ENCODE measurements at regions of chr14 and their contacts with region 1.

Region 1: GRCh38 chr14:23555882-23556699 is at the start of gene THTPA:
- DNase-seq: peak; percentile 90 to 97 (median 92)
- H3K4me3 ChIP-seq: peak within 1 kb of the TSS; percentile 84 to 97
- H3K4me3 Mint-ChIP-seq: peak within 1 kb of the TSS; percentile 95 to 99 (median 96)
- H3K27ac ChIP-seq: peak within 1 kb of the TSS; percentile 86
- H3K27ac Mint-ChIP-seq: peak within 1 kb of the TSS; percentile 82 to 98 (median 97)
- H3K4me1 ChIP-seq: peaks cover 33% of the 10 kb centered on the region
- H3K4me1 Mint-ChIP-seq: peaks cover 15 to 44% (median 28%) of the 10 kb centered on the region in 4 donors
- H3K27me3 ChIP-seq: no peaks in the 10 kb centered on the region
- H3K27me3 Mint-ChIP-seq: peaks cover 0 to 2% of the 10 kb centered on the region in 2 donors
- total RNA-seq, gene THTPA: 25.6 to 26.2 TPM

Region 2: GRCh38 chr14:23301288-23301968 is 254.7 kb before region 1 on chr14:
- CTCF ChIA-PET with region 1: interaction called, 4 read pairs
- POLR2A ChIA-PET with region 1: interaction called, 4 read pairs
- intact Hi-C with region 1: loop called (anchors 1 kb)
- DNase-seq: peak; percentile 95 to 99 (median 98)
- H3K4me3 ChIP-seq: peak overlapping the region; percentile 86 to 90
- H3K4me3 Mint-ChIP-seq: peak overlapping the region; percentile 89 to 100 (median 90)
- H3K27ac ChIP-seq: peak overlapping the region; percentile 87
- H3K27ac Mint-ChIP-seq: peak overlapping the region; percentile 92 to 99 (median 96)
- H3K4me1 ChIP-seq: peaks cover 14% of the 10 kb centered on the region
- H3K4me1 Mint-ChIP-seq: peaks cover 14 to 29% (median 23%) of the 10 kb centered on the region in 4 donors
- H3K27me3 ChIP-seq: no peaks in the 10 kb centered on the region
- H3K27me3 Mint-ChIP-seq: peaks cover 8 to 9% of the 10 kb centered on the region in 2 donors

Region 3: DNA sequence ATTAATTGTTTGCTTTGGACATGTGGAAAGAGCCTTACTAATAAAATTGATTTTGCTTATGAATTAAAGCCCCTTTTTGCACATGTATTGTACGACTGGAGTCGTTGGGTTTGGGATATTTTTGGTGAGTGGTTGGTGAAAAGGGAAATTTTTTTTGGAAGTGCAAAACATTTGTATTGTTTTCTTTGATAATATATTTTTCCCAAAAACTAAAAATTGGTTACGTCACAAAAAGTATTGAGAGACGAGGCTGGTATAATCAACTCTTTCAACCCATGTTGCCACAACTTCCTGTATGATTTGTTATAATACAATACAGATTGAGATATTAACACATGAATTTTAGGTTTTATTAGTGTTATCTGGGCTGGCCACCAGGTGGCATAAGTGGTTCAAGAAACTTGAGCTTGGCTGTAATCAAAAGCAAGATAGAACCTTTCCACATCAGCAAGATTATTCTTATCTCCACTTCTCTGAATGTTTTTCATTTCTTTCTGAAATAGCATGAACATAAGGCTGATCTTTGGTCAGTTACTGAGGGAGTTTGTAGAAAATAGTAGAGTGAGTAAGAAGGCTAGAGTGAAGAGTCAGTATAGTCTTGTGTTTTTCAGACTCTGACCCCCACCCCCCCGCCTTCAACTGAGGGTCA is 77.9 kb before region 1 on chr14:
- CTCF ChIA-PET with region 1: interaction called, 174 read pairs
- POLR2A ChIA-PET with region 1: interaction called, 6 read pairs
- intact Hi-C with region 1: no loop called
- DNase-seq: peak; percentile 67 to 73 (median 71)
- H3K4me3 ChIP-seq: no peak overlapping the region
- H3K4me3 Mint-ChIP-seq: no peak overlapping the region
- H3K27ac ChIP-seq: no peak overlapping the region
- H3K27ac Mint-ChIP-seq: peak overlapping the region in 4 of 7 donors; percentile 0 to 83 (median 28)
- H3K4me1 ChIP-seq: peaks cover 8% of the 10 kb centered on the region
- H3K4me1 Mint-ChIP-seq: peaks cover 4 to 12% (median 5%) of the 10 kb centered on the region in 4 donors
- H3K27me3 ChIP-seq: no peaks in the 10 kb centered on the region
- H3K27me3 Mint-ChIP-seq: no peaks in the 10 kb centered on the region

Region 4: GRCh38 chr14:23539248-23540140 is 16.6 kb before region 1 on chr14:
- CTCF ChIA-PET with region 1: interaction called, 83 read pairs
- POLR2A ChIA-PET with region 1: no interaction called
- intact Hi-C with region 1: no loop called
- DNase-seq: peak in 4 of 5 donors; percentile 37 to 45 (median 38)
- H3K4me3 ChIP-seq: no peak overlapping the region
- H3K4me3 Mint-ChIP-seq: no peak overlapping the region
- H3K27ac ChIP-seq: no peak overlapping the region
- H3K27ac Mint-ChIP-seq: peak overlapping the region in 4 of 7 donors; percentile 19 to 74 (median 41)
- H3K4me1 ChIP-seq: no peaks in the 10 kb centered on the region
- H3K4me1 Mint-ChIP-seq: peaks cover 0 to 6% (median under 1%) of the 10 kb centered on the region in 4 donors
- H3K27me3 ChIP-seq: no peaks in the 10 kb centered on the region
- H3K27me3 Mint-ChIP-seq: peaks cover 0 to 3% of the 10 kb centered on the region in 2 donors

Region 5: DNA sequence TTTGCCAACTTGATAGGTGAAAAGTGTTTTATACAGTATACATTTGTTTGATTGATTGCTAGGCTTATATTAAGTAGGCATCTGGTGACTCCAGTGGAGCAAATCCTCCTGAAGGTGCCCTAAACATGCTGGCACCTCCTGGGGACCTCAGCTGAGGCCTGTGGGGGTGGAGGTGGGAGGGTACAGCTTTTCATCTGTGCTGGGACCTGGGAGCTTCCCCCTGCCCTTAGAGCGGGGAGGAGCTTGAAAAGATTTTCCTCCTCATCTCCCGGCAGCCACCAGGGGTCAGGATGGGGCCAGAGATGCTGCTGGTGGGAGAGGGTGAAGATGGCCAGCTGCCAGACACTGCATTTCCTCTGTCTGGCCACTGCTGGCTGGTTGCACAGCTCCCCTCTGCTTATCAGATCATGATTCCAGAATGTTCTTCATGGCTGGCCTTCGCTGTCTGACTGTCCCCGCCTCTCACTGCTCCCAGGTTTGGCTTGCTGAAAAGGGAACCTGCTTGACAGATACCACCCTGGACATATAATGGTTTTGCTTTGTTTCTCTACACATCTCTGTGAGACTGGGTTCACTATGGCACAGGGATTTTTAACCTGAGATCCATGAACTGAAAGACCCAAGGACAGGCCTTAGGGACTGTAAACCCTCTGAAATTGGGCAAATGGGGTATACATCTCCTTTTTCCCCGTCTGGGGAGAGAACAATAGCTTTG is 33.0 kb after region 1 on chr14:
- CTCF ChIA-PET with region 1: interaction called, 11 read pairs
- POLR2A ChIA-PET with region 1: no interaction called
- intact Hi-C with region 1: no loop called
- DNase-seq: peak; percentile 77 to 80 (median 78)
- H3K4me3 ChIP-seq: no peak overlapping the region
- H3K4me3 Mint-ChIP-seq: peak overlapping the region in 1 of 8 donors; percentile 46
- H3K27ac ChIP-seq: no peak overlapping the region
- H3K27ac Mint-ChIP-seq: peak overlapping the region in 1 of 7 donors; percentile 50
- H3K4me1 ChIP-seq: peaks cover 4% of the 10 kb centered on the region
- H3K4me1 Mint-ChIP-seq: peaks cover 4 to 11% (median 6%) of the 10 kb centered on the region in 4 donors
- H3K27me3 ChIP-seq: no peaks in the 10 kb centered on the region
- H3K27me3 Mint-ChIP-seq: peaks cover 7 to 16% of the 10 kb centered on the region in 2 donors

Region 6: DNA sequence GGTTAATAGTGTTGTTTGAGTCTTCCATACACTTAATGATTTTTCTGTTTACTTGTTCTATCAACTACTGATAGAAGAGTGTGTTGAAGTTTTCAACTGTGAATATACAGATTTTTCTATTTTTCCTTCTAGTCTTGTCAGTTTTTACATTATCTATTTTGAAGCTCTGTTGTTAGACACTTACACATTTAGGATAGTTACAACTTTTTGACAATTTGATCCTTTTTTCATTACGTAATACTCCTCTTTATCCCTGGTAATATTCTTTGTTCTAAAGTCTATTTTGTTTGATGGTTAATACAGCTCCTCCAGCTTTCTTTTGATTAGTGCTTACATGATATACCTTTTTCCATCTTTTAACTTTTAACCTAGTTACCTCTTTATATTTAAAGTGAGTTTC is 125.2 kb after region 1 on chr14:
- CTCF ChIA-PET with region 1: no interaction called
- POLR2A ChIA-PET with region 1: no interaction called
- intact Hi-C with region 1: no loop called
- DNase-seq: no peak
- H3K4me3 ChIP-seq: no peak overlapping the region
- H3K4me3 Mint-ChIP-seq: no peak overlapping the region
- H3K27ac ChIP-seq: no peak overlapping the region
- H3K27ac Mint-ChIP-seq: no peak overlapping the region
- H3K4me1 ChIP-seq: no peaks in the 10 kb centered on the region
- H3K4me1 Mint-ChIP-seq: no peaks in the 10 kb centered on the region
- H3K27me3 ChIP-seq: no peaks in the 10 kb centered on the region
- H3K27me3 Mint-ChIP-seq: peaks cover 0 to 6% of the 10 kb centered on the region in 2 donors

Region 7: DNA sequence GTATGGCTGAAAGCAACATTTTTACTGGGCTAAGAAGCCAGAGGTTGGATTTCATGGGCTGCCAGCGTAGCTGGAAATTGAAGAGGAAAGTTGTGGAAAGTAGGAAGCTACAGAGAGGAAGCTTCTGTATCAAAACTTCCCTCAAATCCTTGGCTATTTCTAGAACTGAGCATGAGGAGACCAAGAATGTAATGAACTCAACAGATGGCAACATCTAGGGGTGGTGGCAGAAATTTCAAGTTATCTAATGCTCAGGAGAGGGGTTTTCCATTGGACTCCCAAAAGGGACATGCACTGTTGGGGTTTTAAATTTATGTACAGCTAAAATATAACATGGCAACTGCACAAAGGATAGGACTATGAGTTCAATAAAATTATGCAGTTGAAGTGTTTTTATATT is 231.3 kb after region 1 on chr14:
- CTCF ChIA-PET with region 1: no interaction called
- POLR2A ChIA-PET with region 1: no interaction called
- intact Hi-C with region 1: no loop called
- DNase-seq: no peak
- H3K4me3 ChIP-seq: no peak overlapping the region
- H3K4me3 Mint-ChIP-seq: no peak overlapping the region
- H3K27ac ChIP-seq: no peak overlapping the region
- H3K27ac Mint-ChIP-seq: no peak overlapping the region
- H3K4me1 ChIP-seq: no peaks in the 10 kb centered on the region
- H3K4me1 Mint-ChIP-seq: no peaks in the 10 kb centered on the region
- H3K27me3 ChIP-seq: no peaks in the 10 kb centered on the region
- H3K27me3 Mint-ChIP-seq: peaks cover 7 to 28% of the 10 kb centered on the region in 2 donors

Region 8: DNA sequence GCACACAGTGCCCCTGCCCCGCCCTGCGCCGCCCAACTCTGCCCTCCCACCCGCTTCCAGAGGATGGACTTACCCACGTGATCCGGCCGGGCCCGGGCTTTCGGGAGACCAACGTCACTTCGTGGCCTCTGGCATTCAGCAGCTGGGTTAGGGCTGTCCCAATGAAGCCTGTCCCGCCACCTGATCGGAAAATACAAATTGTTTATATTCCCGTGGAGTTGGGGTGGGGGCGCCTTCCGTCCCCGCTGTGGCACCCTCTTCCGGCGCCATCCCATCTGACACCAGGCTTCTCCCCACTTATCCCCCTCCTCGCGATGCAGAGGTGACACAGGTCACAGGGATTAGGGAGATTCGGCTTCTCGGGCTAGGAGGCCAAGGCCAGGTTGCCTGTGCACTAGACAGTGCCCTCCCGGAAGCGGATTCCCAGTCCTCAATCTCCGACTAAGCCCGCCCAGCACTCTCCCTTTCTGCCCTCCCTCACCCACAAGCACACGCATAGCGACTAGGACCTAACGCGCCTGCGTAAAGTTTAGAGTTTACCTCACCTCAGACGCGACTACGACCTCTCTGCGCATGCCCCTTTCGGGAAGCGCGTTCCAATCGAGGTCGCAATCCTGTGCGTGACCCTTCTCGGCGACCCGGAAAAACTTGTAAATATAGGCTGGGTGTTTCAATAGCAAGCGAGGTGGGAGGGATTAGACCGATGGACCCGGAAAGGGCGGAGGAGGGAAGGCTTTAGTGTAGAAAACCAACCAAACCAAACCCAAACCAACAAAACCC is 886.4 kb after region 1 on chr14 and contains the start of gene SDR39U1:
- CTCF ChIA-PET with region 1: no interaction called
- POLR2A ChIA-PET with region 1: no interaction called
- intact Hi-C with region 1: loop called (anchors 5 kb)
- DNase-seq: peak; percentile 95 to 99 (median 98)
- H3K4me3 ChIP-seq: peak within 1 kb of the TSS; percentile 73 to 85
- H3K4me3 Mint-ChIP-seq: peak within 1 kb of the TSS; percentile 87 to 97 (median 92)
- H3K27ac ChIP-seq: peak within 1 kb of the TSS; percentile 93
- H3K27ac Mint-ChIP-seq: peak within 1 kb of the TSS; percentile 93 to 99 (median 99)
- H3K4me1 ChIP-seq: peaks cover 27% of the 10 kb centered on the region
- H3K4me1 Mint-ChIP-seq: peaks cover 20 to 57% (median 41%) of the 10 kb centered on the region in 4 donors
- H3K27me3 ChIP-seq: no peaks in the 10 kb centered on the region
- H3K27me3 Mint-ChIP-seq: no peaks in the 10 kb centered on the region
- total RNA-seq, gene SDR39U1: 102 to 109 TPM